Activated CD8-positive, alpha-beta T cell treated with anti-CD3 and anti-CD28 coated beads for 36 hours (primary cell): ENCODE measurements at regions of chr19 and their contacts with region 1.

Region 1: DNA sequence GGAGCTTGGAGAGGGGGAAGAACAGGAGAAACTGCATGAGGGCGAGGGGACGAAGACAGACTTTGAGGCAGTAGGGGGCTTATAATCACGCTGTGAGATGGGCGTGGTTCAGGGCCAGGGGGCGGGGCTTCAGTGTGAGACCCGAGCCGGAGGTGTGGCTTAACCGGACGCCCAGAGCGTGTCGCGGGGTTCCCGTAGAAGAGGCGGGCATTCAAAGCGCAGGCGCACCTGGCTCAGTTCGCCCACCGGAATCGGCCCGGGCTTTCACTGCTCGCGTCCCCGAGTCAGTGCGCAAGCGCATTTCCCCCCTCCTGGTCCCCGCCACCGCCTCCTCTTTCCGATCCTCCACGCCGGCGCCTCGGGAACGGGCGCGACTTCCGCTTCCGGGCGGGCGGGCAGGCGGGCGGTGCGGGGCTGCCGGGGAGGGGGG is 225 bp upstream of the ZNF865 start:
- DNase-seq: peak; percentile 99
- ATAC-seq: peak; percentile 86
- H3K4me3 Mint-ChIP-seq: peak overlapping the region; percentile 80
- H3K27ac Mint-ChIP-seq: peak overlapping the region; percentile 91
- H3K4me1 Mint-ChIP-seq: peaks cover 53% of the 10 kb centered on the region
- H3K27me3 Mint-ChIP-seq: no peaks in the 10 kb centered on the region
- CTCF ChIP-seq: no peak

Region 2: DNA sequence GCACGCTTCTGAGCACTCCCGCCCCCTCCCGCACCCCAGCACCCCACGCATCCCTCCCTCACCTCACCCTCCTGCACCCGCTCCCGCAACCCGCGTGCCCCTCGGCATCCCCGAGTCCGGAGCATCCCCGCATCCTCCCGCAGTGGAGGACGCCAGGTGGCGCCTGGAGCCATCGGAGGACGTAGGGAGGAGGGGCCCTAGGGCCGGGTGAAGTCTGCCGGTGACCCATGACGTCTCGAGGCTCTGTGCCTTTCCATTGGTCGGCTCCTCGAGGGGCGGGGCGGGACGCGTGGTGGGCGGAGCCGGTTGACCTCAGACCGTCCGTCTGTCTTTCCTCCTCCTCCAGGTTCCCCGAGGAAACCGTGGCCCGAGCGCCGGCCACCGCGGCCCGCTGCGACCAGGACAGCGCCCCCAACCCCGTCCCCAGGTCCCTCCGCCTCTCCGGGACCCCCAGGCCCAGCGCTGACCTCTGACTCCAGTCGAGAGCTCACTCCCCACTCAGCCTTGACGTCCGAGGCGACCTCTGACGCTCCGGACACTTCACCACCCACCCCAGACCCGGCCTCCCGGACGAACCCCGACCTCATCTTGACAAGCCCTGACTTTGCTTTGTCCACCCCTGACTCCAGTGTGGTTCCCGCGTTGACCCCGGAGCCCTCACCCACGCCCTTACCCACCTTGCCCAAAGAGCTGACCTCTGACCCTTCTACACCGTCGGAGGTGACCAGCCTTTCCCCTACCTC is 88.2 kb before region 1 on chr19:
- CTCF ChIA-PET with region 1: interaction called, 14 read pairs
- POLR2A ChIA-PET with region 1: interaction called, 3 read pairs
- intact Hi-C with region 1: no loop called
- DNase-seq: peak; percentile 94
- ATAC-seq: peak; percentile 100
- H3K4me3 Mint-ChIP-seq: peak overlapping the region; percentile 55
- H3K27ac Mint-ChIP-seq: peak overlapping the region; percentile 51
- H3K4me1 Mint-ChIP-seq: peaks cover 3% of the 10 kb centered on the region
- H3K27me3 Mint-ChIP-seq: no peaks in the 10 kb centered on the region
- CTCF ChIP-seq: peak; percentile 66

Region 3: DNA sequence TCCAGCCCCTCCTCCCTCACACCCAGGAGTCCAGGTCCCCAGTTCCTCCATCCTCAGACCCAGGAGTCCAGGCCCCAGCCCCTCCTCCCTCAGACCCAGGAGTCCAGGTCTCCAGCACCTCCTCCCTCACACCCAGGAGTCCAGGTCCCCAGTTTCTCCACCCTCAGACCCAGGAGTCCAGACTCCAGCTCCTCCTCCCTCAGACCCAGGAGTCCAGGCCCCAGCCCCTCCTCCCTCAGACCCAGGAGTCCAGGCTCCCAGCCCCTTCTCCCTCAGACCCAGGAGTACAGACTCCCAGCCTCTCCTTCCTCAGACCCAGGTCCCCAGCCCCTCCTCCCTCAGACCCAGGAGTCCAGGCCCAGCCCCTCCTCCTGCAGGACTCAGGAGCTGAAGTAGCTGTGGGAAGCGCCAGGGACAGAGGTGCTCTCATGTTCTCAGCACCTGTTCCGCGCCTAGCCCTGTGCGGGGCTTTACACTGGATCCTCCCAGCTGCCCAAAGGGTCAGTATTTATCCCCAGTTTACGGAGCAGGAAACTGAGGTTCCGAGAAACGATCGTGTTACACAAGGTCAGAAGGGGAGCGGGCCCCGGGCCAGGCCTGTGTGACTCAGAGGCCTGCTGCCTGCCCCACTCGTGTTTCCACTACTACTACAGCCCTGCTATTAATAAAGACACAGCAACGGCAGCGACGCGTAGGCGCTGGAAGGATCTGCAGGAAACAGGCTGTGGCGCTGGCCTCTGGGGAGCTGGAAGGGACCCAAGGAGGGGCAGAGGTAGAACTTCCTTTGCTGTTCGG is 58.2 kb before region 1 on chr19:
- CTCF ChIA-PET with region 1: no interaction called
- POLR2A ChIA-PET with region 1: no interaction called
- intact Hi-C with region 1: no loop called
- DNase-seq: no peak
- ATAC-seq: no peak
- H3K4me3 Mint-ChIP-seq: no peak overlapping the region
- H3K27ac Mint-ChIP-seq: no peak overlapping the region
- H3K4me1 Mint-ChIP-seq: peaks cover 2% of the 10 kb centered on the region
- H3K27me3 Mint-ChIP-seq: peaks cover 7% of the 10 kb centered on the region
- CTCF ChIP-seq: no peak

Region 4: GRCh38 chr19:55615535-55616394 is 10.5 kb after region 1 on chr19:
- CTCF ChIA-PET with region 1: interaction called, 15 read pairs
- POLR2A ChIA-PET with region 1: interaction called, 26 read pairs
- intact Hi-C with region 1: no loop called
- DNase-seq: no peak
- ATAC-seq: no peak
- H3K4me3 Mint-ChIP-seq: no peak overlapping the region
- H3K27ac Mint-ChIP-seq: no peak overlapping the region
- H3K4me1 Mint-ChIP-seq: peaks cover 32% of the 10 kb centered on the region
- H3K27me3 Mint-ChIP-seq: no peaks in the 10 kb centered on the region
- CTCF ChIP-seq: no peak

Region 5: DNA sequence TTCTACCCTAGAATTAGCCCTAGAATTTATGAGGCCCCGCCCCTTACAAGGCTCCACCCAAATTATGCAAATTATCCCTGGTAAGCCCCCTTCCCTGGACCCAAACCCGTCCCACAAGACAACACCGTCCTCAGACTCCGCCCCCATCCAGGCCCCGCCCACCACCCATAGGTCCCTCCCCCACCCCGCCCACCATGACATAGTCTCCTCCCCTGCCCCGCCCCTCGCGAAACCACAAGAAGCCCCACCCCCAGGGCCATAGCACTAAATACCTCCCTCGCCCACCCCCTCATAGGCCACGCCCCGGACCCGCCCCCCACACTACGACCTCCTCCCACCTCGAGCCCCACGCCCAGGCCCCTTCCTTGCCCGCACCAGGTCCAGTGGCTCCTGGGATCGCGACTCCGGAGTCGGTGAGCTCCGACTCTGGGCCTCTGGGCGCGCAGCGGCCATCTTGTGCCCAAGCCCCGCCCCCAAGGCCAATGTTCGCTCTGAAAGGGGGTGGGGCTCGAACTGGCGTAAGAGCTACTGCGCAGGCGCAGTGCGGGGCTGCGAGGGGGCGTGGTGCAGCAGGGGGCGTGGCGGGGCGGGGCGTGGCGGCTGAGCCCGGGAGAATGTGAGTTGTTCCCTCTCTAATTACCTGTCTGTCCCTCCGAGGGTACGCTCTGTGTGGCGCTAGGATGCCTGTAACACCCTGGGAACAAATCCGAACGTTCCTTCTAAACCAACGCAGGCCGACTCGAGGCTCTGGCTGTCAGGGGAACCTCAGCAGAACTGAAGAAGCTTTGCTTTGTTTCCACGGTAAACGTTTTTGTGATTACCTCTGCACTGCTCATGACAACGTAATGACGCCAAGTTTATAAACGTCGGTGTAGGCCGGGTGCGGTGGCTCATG is 19.1 kb after region 1 on chr19 and contains the start of gene ZNF784:
- CTCF ChIA-PET with region 1: interaction called, 18 read pairs
- POLR2A ChIA-PET with region 1: interaction called, 26 read pairs
- intact Hi-C with region 1: no loop called
- DNase-seq: peak; percentile 93
- ATAC-seq: peak; percentile 79
- H3K4me3 Mint-ChIP-seq: peak within 1 kb of the TSS; percentile 82
- H3K27ac Mint-ChIP-seq: peak within 1 kb of the TSS; percentile 97
- H3K4me1 Mint-ChIP-seq: peaks cover 51% of the 10 kb centered on the region
- H3K27me3 Mint-ChIP-seq: peaks cover 6% of the 10 kb centered on the region
- CTCF ChIP-seq: no peak
- total RNA-seq, gene ZNF784: 3.6 to 3.7 TPM

Region 6: GRCh38 chr19:55688422-55689246 is 83.4 kb after region 1 on chr19:
- CTCF ChIA-PET with region 1: no interaction called
- POLR2A ChIA-PET with region 1: no interaction called
- intact Hi-C with region 1: no loop called
- DNase-seq: no peak
- ATAC-seq: no peak
- H3K4me3 Mint-ChIP-seq: no peak overlapping the region
- H3K27ac Mint-ChIP-seq: no peak overlapping the region
- H3K4me1 Mint-ChIP-seq: peaks cover 9% of the 10 kb centered on the region
- H3K27me3 Mint-ChIP-seq: no peaks in the 10 kb centered on the region
- CTCF ChIP-seq: no peak